Calu3 (cell line): ENCODE measurements at regions of chr5 and their contacts with region 1.

Region 1: DNA sequence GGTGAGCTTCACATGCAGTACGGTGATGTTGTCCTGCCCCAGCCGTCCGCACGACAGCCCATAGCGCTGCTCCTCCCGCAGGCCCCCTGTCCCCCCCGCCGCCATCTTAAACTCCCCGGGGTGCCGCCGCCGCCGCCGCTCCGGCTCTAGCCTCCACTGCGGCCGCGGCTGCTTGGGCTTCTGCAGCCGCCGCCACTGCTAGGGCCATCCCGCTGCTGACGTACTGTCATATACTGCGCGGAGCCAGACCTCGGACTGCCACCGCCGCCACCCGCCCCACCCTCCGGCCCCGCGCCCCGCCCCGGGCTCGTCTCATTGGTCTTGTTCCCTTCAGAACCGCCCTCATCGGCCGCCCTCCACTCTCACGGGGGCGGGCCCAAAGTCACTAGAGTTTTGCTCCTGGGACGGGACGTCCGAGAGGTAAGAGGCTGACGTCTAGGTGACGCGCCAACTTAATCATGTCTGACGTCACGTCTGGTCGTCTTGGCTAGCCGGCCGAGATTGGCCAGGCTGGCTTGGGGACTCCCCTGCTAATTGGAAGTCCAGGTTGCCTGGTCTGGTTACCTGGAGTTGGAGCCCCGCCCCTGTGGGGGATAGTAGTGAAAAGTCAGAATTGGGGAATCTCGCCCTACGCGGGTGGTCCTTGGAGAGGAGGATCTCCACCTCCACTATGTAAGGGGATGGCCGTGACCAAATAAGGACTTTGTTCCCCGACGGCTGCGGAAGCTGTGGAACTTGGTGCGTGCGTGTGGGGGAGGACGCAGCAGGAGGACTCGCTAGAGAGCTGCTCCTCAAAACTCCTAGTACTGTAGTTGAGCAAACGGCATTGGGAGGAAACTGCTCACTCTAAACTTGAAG is at the start of gene ELL2:
- DNase-seq: peak; percentile 99
- H3K4me3 Mint-ChIP-seq: peak within 1 kb of the TSS; percentile 92
- H3K27ac Mint-ChIP-seq: peak within 1 kb of the TSS; percentile 98
- H3K4me1 Mint-ChIP-seq: peaks cover 61% of the 10 kb centered on the region
- H3K27me3 Mint-ChIP-seq: no peaks in the 10 kb centered on the region
- CTCF ChIP-seq: no peak
- total RNA-seq, gene ELL2: 56.2 and 57.7 TPM in 2 replicates

Region 2: DNA sequence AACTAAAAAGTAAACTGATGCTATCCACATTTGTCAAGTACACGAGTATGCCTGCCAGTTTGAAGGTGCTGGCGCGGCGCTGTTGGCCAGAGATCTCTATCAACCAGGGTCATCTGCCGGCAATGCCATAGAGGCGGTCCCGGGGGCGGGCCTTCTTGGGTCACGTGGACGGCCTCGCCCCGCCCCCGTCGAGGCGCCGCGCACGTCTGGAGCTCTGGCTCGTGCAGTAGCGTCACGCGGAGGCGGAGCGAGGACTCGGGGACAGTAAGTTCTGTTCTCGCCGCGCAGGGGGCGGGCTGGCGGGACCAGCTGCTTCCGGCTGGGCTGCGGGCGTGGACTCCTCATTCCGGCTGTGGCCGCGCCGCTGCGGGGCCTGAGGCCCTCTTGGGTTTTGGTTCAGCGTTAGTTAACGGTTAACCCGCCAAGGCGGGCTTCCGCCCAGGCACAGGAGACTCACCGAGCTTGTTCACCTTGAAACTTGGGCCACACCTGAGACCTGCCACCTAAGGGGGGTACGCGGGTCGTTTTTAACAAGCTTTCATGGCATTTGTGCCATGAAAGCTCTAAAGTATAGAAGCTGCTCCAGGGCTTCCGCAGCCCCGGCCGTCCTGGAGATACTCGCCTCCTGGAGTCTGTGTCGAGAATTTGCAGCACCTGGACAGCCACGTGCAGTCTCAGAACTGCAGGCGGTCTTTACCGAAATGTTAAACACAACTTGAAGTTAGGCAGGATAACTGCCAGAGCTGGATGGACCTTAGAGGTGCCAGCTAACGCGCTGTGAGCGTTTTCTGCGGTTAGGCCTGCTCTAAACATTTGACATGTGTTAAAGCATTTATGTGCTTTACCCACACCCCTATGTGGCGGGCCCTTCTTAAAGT is 315.1 kb before region 1 on chr5 and contains the start of gene RFESD:
- CTCF ChIA-PET with region 1: no interaction called
- intact Hi-C with region 1: loop called (anchors 10 kb)
- DNase-seq: peak; percentile 100
- H3K4me3 Mint-ChIP-seq: peak within 1 kb of the TSS; percentile 80
- H3K27ac Mint-ChIP-seq: peak within 1 kb of the TSS; percentile 75
- H3K4me1 Mint-ChIP-seq: peaks cover 18% of the 10 kb centered on the region
- H3K27me3 Mint-ChIP-seq: no peaks in the 10 kb centered on the region
- CTCF ChIP-seq: peak; percentile 47
- total RNA-seq, gene RFESD: 1.8 and 2.9 TPM in 2 replicates

Region 3: GRCh38 chr5:95892780-95893354 is 69.0 kb before region 1 on chr5:
- CTCF ChIA-PET with region 1: interaction called, 4 read pairs
- intact Hi-C with region 1: loop called (anchors 2 kb)
- DNase-seq: peak; percentile 74
- H3K4me3 Mint-ChIP-seq: no peak overlapping the region
- H3K27ac Mint-ChIP-seq: no peak overlapping the region
- H3K4me1 Mint-ChIP-seq: peaks cover 6% of the 10 kb centered on the region
- H3K27me3 Mint-ChIP-seq: no peaks in the 10 kb centered on the region
- CTCF ChIP-seq: peak; percentile 51

Region 4: GRCh38 chr5:96026406-96027041 is 64.7 kb after region 1 on chr5:
- CTCF ChIA-PET with region 1: no interaction called
- intact Hi-C with region 1: loop called (anchors 2 kb)
- DNase-seq: peak; percentile 31
- H3K4me3 Mint-ChIP-seq: no peak overlapping the region
- H3K27ac Mint-ChIP-seq: peak overlapping the region; percentile 89
- H3K4me1 Mint-ChIP-seq: peaks cover 42% of the 10 kb centered on the region
- H3K27me3 Mint-ChIP-seq: no peaks in the 10 kb centered on the region
- CTCF ChIP-seq: no peak

Region 5: GRCh38 chr5:96093890-96094381 is 132.1 kb after region 1 on chr5:
- CTCF ChIA-PET with region 1: interaction called, 5 read pairs
- intact Hi-C with region 1: loop called (anchors 1 kb)
- DNase-seq: peak; percentile 41
- H3K4me3 Mint-ChIP-seq: peak overlapping the region; percentile 0
- H3K27ac Mint-ChIP-seq: peak overlapping the region; percentile 68
- H3K4me1 Mint-ChIP-seq: peaks cover 46% of the 10 kb centered on the region
- H3K27me3 Mint-ChIP-seq: no peaks in the 10 kb centered on the region
- CTCF ChIP-seq: no peak

Region 6: DNA sequence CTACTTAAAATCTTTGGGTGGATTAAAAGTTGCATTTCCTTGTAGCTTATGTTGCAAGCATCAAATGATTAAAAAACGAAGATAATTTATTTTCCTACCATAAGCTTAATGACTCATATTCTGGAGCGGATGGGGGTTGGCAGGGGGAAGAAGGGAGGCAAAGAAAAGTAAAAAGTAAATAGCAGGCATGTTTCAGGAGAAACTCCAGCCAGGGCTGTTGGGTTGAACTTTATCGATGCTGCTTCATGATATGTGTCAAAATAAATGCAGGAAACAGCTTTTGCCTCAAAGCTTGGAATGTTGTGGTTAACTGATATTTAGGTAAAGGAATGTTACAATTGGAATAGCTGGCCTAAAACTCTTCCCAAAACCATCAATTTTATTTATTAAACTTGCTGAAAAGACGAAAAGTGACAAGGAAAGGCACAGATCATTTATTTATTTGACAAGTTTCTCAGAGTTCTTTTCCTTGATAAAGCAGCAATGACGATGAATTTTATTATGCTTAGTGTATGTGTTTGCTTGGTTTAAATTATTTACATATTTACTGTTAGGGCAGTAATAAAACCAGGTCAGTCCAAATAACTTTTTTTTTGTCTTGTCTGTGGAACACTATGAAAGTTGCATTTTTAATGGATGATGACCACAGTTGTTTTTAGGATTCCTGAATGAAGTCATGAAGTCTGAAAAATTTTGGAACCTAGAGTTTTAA is 293.3 kb after region 1 on chr5:
- CTCF ChIA-PET with region 1: interaction called, 3 read pairs
- intact Hi-C with region 1: loop called (anchors 2 kb)
- DNase-seq: peak; percentile 67
- H3K4me3 Mint-ChIP-seq: no peak overlapping the region
- H3K27ac Mint-ChIP-seq: peak overlapping the region; percentile 65
- H3K4me1 Mint-ChIP-seq: peaks cover 47% of the 10 kb centered on the region
- H3K27me3 Mint-ChIP-seq: no peaks in the 10 kb centered on the region
- CTCF ChIP-seq: no peak